Colonic mucosa (tissue), 4 donors: ENCODE measurements at regions of chr6 and their contacts with region 1.

Region 1: GRCh38 chr6:168355716-168356449 is 36.3 kb upstream of the DACT2 start:
- DNase-seq: peak; percentile 66
- H3K4me3 ChIP-seq: peak overlapping the region; percentile 8
- H3K27ac ChIP-seq: no peak overlapping the region
- H3K4me1 ChIP-seq: no peaks in the 10 kb centered on the region
- H3K27me3 ChIP-seq: no peaks in the 10 kb centered on the region
- CTCF ChIP-seq: peak; percentile 62

Region 2: GRCh38 chr6:168035098-168035660 is 320.7 kb before region 1 on chr6:
- intact Hi-C with region 1: no loop called
- DNase-seq: peak; percentile 35
- H3K4me3 ChIP-seq: peak overlapping the region; percentile 34
- H3K27ac ChIP-seq: peak overlapping the region; percentile 82
- H3K4me1 ChIP-seq: peaks cover 6% of the 10 kb centered on the region
- H3K27me3 ChIP-seq: no peaks in the 10 kb centered on the region
- CTCF ChIP-seq: no peak

Region 3: GRCh38 chr6:168150551-168151320 is 205.1 kb before region 1 on chr6:
- intact Hi-C with region 1: loop called (anchors 2 kb)
- DNase-seq: peak; percentile 53
- H3K4me3 ChIP-seq: no peak overlapping the region
- H3K27ac ChIP-seq: no peak overlapping the region
- H3K4me1 ChIP-seq: no peaks in the 10 kb centered on the region
- H3K27me3 ChIP-seq: no peaks in the 10 kb centered on the region
- CTCF ChIP-seq: peak; percentile 48

Region 4: DNA sequence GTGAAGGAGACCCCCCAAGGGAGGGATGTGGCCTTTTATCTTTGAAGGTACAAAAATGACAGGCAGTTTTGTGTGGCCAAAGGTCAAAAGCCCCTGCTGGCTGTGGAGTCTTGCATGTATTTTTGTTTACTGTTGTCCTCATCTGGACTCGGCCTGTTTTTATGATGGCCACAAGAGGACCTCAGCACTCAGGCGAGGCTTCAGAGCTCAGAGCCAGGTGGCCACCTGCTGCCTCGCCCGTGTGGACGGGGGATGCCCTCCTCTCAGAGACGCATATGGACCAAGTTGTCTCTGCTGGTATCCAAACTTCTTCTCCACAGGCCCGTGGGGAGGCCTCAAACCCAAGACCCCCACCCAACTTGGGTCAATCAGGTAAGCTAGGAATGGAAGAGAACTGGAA is 154.5 kb before region 1 on chr6:
- intact Hi-C with region 1: loop called (anchors 5 kb)
- DNase-seq: no peak
- H3K4me3 ChIP-seq: no peak overlapping the region
- H3K27ac ChIP-seq: no peak overlapping the region
- H3K4me1 ChIP-seq: no peaks in the 10 kb centered on the region
- H3K27me3 ChIP-seq: no peaks in the 10 kb centered on the region
- CTCF ChIP-seq: peak; percentile 35

Region 5: DNA sequence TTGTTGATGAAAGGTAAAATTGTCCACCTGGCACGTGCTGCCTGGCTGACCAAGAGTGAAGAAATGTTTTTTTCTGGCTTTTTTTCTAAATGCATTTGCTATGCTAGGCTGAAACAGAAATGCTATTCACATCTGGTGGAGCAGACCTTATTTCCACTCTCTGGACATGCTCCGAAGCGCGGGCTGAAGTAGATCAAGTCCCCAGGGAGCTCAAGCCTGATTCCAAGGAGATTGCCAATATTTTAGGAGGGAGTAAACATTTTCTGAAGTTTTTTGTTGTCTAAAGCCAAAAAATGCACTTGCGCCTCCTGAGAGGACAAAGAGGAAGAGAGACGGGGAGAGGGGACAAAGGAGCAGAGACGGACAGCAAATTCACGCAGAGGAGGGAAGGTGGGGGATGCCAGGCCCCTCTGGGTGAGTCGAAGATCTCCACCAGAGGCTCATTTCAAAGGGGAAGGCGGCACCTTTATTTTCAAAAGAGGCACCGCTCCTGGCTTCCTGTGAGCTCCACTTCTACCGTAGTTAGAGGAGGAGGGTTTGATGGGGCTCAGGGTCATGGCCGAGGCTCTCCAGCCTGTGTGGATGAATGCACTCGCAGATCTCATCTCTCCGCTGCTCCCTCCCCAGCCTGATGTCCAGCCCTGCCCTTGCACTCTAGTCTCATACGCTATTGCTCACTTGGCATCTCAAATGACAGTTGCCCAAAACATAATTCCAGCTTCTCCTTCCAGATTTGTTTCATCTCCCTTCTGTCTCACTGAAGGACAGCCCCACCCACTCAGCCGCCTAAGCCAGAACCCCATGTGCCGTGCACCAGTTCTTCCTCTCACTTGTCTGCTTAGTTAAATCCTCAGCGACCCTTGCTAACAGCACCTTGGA is 62.0 kb after region 1 on chr6:
- intact Hi-C with region 1: no loop called
- DNase-seq: no peak
- H3K4me3 ChIP-seq: no peak overlapping the region
- H3K27ac ChIP-seq: no peak overlapping the region
- H3K4me1 ChIP-seq: no peaks in the 10 kb centered on the region
- H3K27me3 ChIP-seq: no peaks in the 10 kb centered on the region
- CTCF ChIP-seq: no peak